Heart left ventricle (tissue), 16 donors: ENCODE measurements at regions of chr17 and their contacts with region 1.

Region 1: GRCh38 chr17:57284984-57285646 is 28.8 kb downstream of the MSI2 start:
- DNase-seq: no peak
- ATAC-seq: no peak
- H3K4me3 ChIP-seq: peak overlapping the region in 1 of 12 donors; percentile 10
- H3K27ac ChIP-seq: no peak overlapping the region
- H3K4me1 ChIP-seq: peaks cover 0 to 72% (median 36%) of the 10 kb centered on the region in 12 donors
- H3K27me3 ChIP-seq: no peaks in the 10 kb centered on the region
- CTCF ChIP-seq: no peak
- POLR2A ChIP-seq: no peak

Region 2: DNA sequence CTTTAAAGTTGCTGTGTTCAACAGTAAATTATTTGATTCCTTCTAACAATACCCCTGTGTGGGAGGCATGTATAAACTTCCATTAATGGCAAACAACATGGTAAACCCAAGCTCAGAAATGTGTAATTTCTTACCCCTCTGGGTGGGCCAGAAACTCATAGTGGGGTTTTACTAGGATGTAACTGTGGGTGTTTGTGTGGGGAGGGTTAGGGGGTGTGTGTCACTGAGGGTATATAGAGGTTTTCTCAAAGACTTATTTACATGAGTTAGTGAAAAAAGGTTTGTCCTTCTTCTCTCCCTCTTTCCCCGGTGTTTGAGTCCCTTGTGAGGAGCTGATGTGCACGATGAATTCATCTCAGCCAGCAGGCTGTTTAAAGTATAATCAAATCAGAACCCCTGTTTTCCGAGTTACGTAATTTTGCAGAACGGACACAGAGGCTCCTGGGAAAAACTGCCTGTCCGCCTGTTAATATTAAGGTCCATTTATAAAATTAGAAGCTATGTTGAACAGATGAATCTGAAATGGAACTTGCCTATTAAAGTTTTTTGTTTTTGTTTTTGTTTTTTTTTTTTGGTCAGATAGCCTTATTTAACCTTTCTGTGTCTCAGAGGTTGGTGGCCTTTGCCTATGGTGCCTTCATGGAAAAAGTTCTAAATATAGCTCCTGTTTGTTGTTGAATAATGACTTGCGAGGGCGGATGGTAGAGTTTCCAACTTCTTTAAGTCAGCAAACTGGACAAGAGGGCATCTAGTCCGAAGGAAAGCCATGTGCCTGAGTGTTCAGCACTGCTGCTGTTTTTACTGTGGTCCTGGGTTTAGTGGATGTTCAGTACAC is 44.5 kb after region 1 on chr17:
- intact Hi-C with region 1: loop called in 1 of 10 experiments (anchors 5 kb)
- DNase-seq: peak in 2 of 5 donors; percentile 27 to 35
- ATAC-seq: peak; percentile 53 to 85 (median 78)
- H3K4me3 ChIP-seq: peak overlapping the region in 2 of 12 donors; percentile 8
- H3K27ac ChIP-seq: peak overlapping the region; percentile 26 to 87 (median 76)
- H3K4me1 ChIP-seq: peaks cover 0 to 54% (median 16%) of the 10 kb centered on the region in 12 donors
- H3K27me3 ChIP-seq: no peaks in the 10 kb centered on the region
- CTCF ChIP-seq: no peak
- POLR2A ChIP-seq: no peak